ENCODE measurements at regions of chr11 and their contacts with region 1.

Region 1: GRCh38 chr11:95419915-95420314 is 188.9 kb upstream of the SESN3 start:
- DNase-seq: no peak
- H3K4me3 ChIP-seq: no peak overlapping the region
- H3K27ac ChIP-seq: no peak overlapping the region
- H3K4me1 ChIP-seq: no peaks in the 10 kb centered on the region
- H3K27me3 ChIP-seq: no peaks in the 10 kb centered on the region
- CTCF ChIP-seq: no peak
- EP300 ChIP-seq: no peak
- POLR2A ChIP-seq: no peak

Region 2: DNA sequence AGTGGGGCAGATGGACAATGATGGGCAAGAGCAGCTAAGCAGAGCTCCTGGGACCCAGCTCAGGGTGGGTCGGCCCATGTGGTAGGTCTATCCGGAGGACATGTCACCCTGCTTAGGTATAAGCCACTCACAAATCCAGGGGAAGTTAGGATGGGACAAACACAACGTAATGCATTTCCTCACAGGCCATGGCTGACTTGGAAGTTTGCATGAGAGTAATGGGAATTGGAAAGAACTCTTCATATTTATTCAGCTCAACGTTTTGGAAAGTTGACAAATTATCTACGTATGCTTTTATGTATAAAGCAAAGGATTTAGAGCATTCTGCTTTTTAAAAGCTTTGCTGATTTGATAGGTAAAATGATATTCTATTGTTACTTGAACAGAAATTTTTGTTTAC is 1951.6 kb before region 1 on chr11:
- in situ Hi-C with region 1: no loop called
- intact Hi-C with region 1: loop called (anchors 10 kb)
- DNase-seq: no peak
- H3K4me3 ChIP-seq: no peak overlapping the region
- H3K27ac ChIP-seq: no peak overlapping the region
- H3K4me1 ChIP-seq: no peaks in the 10 kb centered on the region
- H3K27me3 ChIP-seq: no peaks in the 10 kb centered on the region
- CTCF ChIP-seq: no peak
- EP300 ChIP-seq: no peak
- POLR2A ChIP-seq: no peak

Region 3: DNA sequence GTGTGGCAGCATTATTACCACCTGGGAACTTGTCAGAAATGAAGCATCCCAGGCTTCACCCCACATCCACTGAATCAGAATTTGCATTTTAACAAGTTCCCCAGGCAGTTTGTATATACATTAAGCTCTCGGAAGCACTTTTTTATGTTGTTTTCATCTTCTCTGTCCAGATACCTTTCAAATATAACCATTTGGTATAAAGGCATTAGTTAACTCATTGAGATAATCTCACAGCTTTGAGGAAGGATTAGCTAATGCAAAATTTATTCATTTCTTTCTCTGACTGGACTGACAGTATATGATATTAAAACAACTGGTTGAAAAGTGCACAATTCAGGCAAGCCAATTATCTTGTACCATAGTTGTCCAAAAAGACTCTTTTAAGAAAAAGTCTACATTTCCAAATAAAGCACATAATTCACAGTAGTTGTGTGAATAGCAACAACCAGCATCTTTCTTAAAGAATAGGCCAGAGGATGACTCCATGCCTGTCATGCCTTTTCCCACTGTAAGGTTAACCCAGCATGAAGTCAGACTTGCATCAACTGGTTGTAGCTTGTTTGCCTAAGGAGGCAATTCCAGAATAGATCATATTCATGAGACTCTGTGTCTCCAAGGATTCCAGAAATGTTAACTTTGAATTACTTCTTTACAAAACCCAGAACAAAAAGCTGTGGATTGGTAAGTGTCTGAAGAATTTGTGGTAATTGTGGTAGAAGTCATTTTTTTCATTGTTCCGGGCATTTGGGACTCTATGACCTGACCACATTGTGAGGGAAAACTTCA is 65.4 kb after region 1 on chr11:
- in situ Hi-C with region 1: no loop called
- intact Hi-C with region 1: no loop called
- DNase-seq: no peak
- H3K4me3 ChIP-seq: no peak overlapping the region
- H3K27ac ChIP-seq: no peak overlapping the region
- H3K4me1 ChIP-seq: no peaks in the 10 kb centered on the region
- H3K27me3 ChIP-seq: no peaks in the 10 kb centered on the region
- CTCF ChIP-seq: no peak
- EP300 ChIP-seq: no peak
- POLR2A ChIP-seq: no peak